Mammary epithelial cell (primary cell): ENCODE measurements at regions of chr11 and their contacts with region 1.

Region 1: GRCh38 chr11:33716236-33716635 is 15.6 kb upstream of the C11orf91 start:
- DNase-seq: peak; percentile 80
- H3K4me3 ChIP-seq: no peak overlapping the region
- H3K27ac ChIP-seq: peak overlapping the region; percentile 93
- H3K4me1 ChIP-seq: peaks cover 59% of the 10 kb centered on the region
- H3K27me3 ChIP-seq: no peaks in the 10 kb centered on the region
- CTCF ChIP-seq: peak; percentile 44 to 58

Region 2: GRCh38 chr11:33700425-33701271 is 15.6 kb before region 1 on chr11 and contains the start of gene C11orf91:
- CTCF ChIA-PET with region 1: no interaction called
- dilution Hi-C with region 1: no loop called
- in situ Hi-C with region 1: no loop called
- intact Hi-C with region 1: loop called (anchors 1 kb)
- DNase-seq: peak; percentile 92
- H3K4me3 ChIP-seq: peak within 1 kb of the TSS; percentile 5 to 70 (median 22)
- H3K27ac ChIP-seq: peak within 1 kb of the TSS; percentile 98
- H3K4me1 ChIP-seq: peaks cover 84% of the 10 kb centered on the region
- H3K27me3 ChIP-seq: no peaks in the 10 kb centered on the region
- CTCF ChIP-seq: no peak
- total RNA-seq, gene C11orf91: 7.6 TPM in 1 of 2 donors, not detected in the other